ENCODE measurements at regions of chr5 and their contacts with region 1.

Region 1: DNA sequence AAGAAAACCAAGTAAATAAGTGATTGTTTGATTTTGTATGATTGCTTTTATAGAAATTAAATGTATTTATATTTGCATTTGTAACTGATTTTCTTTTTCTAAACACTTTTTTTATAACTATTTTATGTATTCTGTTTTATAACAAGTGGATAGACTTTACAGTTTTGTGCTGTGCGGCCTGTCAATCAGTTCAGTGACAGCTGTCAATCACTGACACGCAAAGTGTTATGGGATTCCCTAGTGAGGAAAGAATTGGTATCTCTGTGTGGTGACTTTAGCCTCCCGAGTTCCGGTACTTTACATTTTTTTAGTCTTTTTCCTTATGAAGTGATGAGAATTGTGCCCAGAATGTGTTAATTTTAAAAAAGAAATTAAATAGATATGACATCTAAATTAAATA is 16.3 kb downstream of the GPR151 start:
- DNase-seq: no peak
- ATAC-seq: no peak
- H3K4me3 Mint-ChIP-seq: no peak overlapping the region
- H3K27ac Mint-ChIP-seq: no peak overlapping the region
- H3K4me1 Mint-ChIP-seq: no peaks in the 10 kb centered on the region
- H3K27me3 Mint-ChIP-seq: no peaks in the 10 kb centered on the region

Region 2: GRCh38 chr5:146283344-146283761 is 216.3 kb before region 1 on chr5:
- CTCF ChIA-PET with region 1: no interaction called
- POLR2A ChIA-PET with region 1: no interaction called
- intact Hi-C with region 1: loop called in 1 of 2 experiments (anchors 10 kb)
- DNase-seq: no peak
- ATAC-seq: no peak
- H3K4me3 Mint-ChIP-seq: no peak overlapping the region
- H3K27ac Mint-ChIP-seq: no peak overlapping the region
- H3K4me1 Mint-ChIP-seq: peaks cover 3% of the 10 kb centered on the region
- H3K27me3 Mint-ChIP-seq: no peaks in the 10 kb centered on the region

Region 3: GRCh38 chr5:146466521-146467349 is 32.9 kb before region 1 on chr5:
- CTCF ChIA-PET with region 1: no interaction called
- POLR2A ChIA-PET with region 1: no interaction called
- intact Hi-C with region 1: loop called in 1 of 2 experiments (anchors 5 kb)
- DNase-seq: no peak
- ATAC-seq: no peak
- H3K4me3 Mint-ChIP-seq: no peak overlapping the region
- H3K27ac Mint-ChIP-seq: no peak overlapping the region
- H3K4me1 Mint-ChIP-seq: peaks cover 16% of the 10 kb centered on the region
- H3K27me3 Mint-ChIP-seq: no peaks in the 10 kb centered on the region

Region 4: DNA sequence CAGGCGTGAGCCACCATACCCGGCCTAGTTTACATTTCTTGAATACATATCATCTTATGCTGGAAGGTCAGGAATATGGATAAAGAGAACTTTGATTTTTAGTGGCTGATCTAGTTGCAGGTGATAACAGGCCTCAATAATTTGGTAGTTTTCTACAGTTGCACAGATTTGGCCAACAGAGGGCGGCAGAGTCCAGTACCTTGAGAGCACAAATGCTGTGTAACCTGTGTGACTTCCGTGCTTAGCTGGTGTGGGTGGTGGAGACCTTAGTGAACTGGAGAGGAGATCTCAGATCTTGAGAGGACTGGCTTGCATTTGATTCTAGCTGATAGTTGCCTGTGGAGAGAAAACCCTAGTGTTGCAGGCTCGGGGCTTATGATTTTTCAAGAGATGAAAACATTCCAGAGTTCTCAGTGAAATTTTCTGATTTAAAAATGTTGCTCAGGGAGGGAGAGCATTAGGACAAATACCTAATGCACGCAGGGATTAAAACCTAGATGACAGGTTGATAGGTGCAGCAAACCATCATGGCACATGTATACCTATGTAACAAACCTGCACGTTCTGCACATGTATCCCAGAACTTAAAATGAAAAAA is 33.7 kb after region 1 on chr5:
- CTCF ChIA-PET with region 1: no interaction called
- POLR2A ChIA-PET with region 1: no interaction called
- intact Hi-C with region 1: no loop called
- DNase-seq: peak; percentile 88
- ATAC-seq: peak; percentile 98
- H3K4me3 Mint-ChIP-seq: no peak overlapping the region
- H3K27ac Mint-ChIP-seq: no peak overlapping the region
- H3K4me1 Mint-ChIP-seq: peaks cover 3% of the 10 kb centered on the region
- H3K27me3 Mint-ChIP-seq: no peaks in the 10 kb centered on the region

Region 5: DNA sequence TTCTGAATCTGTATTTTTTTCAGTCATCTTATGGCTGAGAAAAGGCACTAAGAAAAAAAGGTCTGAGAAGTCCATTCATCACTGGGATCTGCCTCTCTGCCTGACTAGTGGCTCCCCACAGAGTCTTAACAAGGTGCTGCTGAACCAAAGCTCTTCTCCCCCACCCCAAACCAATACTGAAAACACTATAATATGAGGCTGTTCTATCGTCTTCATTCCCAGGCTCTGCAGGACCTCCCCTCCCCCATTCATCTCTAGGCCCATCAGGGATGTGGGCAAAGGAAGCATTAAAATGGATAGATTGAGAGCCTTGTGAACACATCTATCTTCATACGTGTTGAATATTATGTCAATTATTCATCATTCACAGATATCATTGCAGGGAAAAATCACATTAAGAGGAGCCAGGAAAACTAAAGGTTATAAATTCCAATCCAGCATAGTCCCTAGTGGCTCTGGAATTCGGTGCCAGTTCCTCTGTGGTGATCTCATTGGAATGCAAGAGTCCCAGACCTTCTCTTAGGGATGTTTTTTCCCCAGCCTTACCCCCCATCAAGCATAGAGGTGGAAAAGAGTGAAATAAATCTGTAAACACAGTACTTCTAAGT is 60.6 kb after region 1 on chr5:
- CTCF ChIA-PET with region 1: no interaction called
- POLR2A ChIA-PET with region 1: no interaction called
- intact Hi-C with region 1: no loop called
- DNase-seq: no peak
- ATAC-seq: no peak
- H3K4me3 Mint-ChIP-seq: no peak overlapping the region
- H3K27ac Mint-ChIP-seq: no peak overlapping the region
- H3K4me1 Mint-ChIP-seq: no peaks in the 10 kb centered on the region
- H3K27me3 Mint-ChIP-seq: peaks cover 2% of the 10 kb centered on the region